Activated naive CD4-positive, alpha-beta T cell treated with anti-CD3 and anti-CD28 coated beads for 36 hours (primary cell): ENCODE measurements at regions of chr9 and their contacts with region 1.

Region 1: DNA sequence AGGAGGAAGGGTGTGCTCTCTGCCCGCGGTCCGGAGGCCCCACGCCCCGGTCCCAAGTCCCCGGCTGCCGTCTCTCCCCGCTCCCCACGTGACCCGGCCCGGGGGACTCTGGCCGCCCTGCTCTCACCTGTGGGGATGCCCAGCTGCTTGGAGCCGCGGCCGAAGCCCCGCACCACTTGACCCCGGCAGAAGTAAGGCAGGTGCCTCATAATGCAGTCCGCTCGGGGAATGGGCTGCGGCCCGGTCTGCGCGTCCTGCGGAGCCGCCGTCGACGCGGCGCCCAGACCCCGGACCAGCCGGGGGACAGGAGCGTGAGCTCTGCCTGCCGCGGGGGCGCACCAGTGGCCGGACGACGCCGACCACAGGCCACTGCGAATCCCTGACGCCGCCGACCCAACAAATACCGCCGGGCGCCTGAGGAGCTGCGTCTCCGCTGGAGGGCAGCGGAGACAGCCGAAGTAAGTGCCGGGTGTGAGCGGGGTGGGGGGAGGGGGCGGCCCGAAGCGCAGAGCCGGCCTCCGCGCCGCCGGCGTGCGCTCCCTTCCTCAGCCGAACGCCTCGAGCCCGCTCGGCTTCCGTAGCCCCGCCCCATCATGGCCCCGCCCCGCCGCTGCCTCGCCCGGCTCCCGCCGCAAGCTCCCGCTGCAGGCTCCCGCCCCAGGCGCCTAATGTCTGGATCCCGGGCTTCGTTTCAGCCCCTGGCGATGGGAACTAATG is at the start of gene RFK:
- DNase-seq: peak; percentile 94
- H3K4me3 Mint-ChIP-seq: peak within 1 kb of the TSS; percentile 96
- H3K27ac Mint-ChIP-seq: peak within 1 kb of the TSS; percentile 92
- H3K4me1 Mint-ChIP-seq: peaks cover 25% of the 10 kb centered on the region
- H3K27me3 Mint-ChIP-seq: no peaks in the 10 kb centered on the region
- total RNA-seq, gene RFK: 4.2 to 5.2 TPM

Region 2: GRCh38 chr9:75988663-75989062 is 405.5 kb before region 1 on chr9:
- CTCF ChIA-PET with region 1: no interaction called
- intact Hi-C with region 1: no loop called
- DNase-seq: no peak
- H3K4me3 Mint-ChIP-seq: no peak overlapping the region
- H3K27ac Mint-ChIP-seq: no peak overlapping the region
- H3K4me1 Mint-ChIP-seq: peaks cover 50% of the 10 kb centered on the region
- H3K27me3 Mint-ChIP-seq: no peaks in the 10 kb centered on the region

Region 3: GRCh38 chr9:76271755-76272154 is 122.4 kb before region 1 on chr9:
- CTCF ChIA-PET with region 1: no interaction called
- intact Hi-C with region 1: no loop called
- DNase-seq: no peak
- H3K4me3 Mint-ChIP-seq: no peak overlapping the region
- H3K27ac Mint-ChIP-seq: no peak overlapping the region
- H3K4me1 Mint-ChIP-seq: no peaks in the 10 kb centered on the region
- H3K27me3 Mint-ChIP-seq: no peaks in the 10 kb centered on the region

Region 4: GRCh38 chr9:76379512-76379911 is 14.6 kb before region 1 on chr9:
- CTCF ChIA-PET with region 1: interaction called, 13 read pairs
- intact Hi-C with region 1: no loop called
- DNase-seq: no peak
- H3K4me3 Mint-ChIP-seq: no peak overlapping the region
- H3K27ac Mint-ChIP-seq: no peak overlapping the region
- H3K4me1 Mint-ChIP-seq: no peaks in the 10 kb centered on the region
- H3K27me3 Mint-ChIP-seq: no peaks in the 10 kb centered on the region

Region 5: DNA sequence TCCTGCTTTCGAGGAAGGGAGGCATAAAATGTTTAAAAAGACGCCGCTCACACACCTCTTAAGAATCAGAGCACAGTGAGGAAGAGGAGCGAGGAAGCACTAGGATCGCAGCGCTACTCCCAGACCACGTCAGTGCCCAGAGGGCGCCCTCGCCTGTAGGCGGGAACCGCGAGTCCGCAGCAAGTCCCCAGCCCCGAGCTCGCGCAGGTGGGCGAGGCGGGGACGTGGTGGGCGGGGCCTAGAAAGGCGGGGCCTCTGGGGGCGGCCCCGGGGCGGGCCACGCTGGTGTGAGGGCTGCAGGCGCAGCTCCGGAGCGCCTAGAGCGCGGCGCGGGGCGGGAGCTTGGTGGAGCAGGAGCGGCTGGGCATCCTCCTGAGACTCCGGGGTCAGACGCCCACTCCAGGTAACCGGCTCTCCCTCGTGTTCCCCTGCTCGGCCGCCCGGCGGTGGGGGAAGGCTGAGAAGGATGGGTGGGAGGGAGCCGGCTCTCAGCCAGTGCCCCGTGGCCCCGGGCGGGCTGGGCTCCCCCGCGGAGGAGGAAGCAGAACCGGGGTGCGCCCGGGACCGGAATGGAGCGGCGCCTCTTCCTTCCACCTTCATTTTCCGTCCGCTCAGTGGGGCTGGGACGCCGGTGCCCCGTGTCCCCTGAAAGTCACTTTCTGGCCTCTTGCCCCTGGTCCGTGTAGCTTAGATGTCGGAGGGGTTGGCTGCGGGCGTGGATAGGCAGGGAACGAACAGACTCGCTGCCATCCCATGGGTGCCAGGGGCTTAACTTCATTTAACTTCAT is 65.0 kb after region 1 on chr9 and contains the start of gene GCNT1:
- CTCF ChIA-PET with region 1: interaction called, 5 read pairs
- intact Hi-C with region 1: loop called (anchors 1 kb)
- DNase-seq: peak; percentile 89
- H3K4me3 Mint-ChIP-seq: peak within 1 kb of the TSS; percentile 90
- H3K27ac Mint-ChIP-seq: no peak within 1 kb of the TSS
- H3K4me1 Mint-ChIP-seq: peaks cover 12% of the 10 kb centered on the region
- H3K27me3 Mint-ChIP-seq: peaks cover 8% of the 10 kb centered on the region
- total RNA-seq, gene GCNT1: 0.48 to 0.54 TPM

Region 6: DNA sequence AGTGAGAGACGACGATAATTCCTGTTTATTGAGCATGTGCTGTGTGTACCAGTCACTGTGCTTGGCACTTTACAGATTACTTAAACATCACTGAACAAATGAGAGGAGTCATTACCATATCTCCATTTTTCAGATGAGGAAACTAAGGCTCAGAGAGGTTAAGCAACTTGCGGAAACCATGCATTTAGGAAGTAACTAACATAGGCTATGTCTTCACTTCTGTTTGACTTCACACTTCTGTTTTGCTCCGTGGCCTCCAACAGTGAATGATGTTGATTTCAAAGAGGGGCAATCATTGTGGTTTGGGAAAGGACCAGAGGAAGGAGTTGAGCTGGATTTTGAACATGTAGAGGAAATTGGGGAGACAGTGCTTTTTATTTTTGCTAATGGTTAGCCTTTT is 81.6 kb after region 1 on chr9:
- CTCF ChIA-PET with region 1: no interaction called
- intact Hi-C with region 1: no loop called
- DNase-seq: no peak
- H3K4me3 Mint-ChIP-seq: no peak overlapping the region
- H3K27ac Mint-ChIP-seq: no peak overlapping the region
- H3K4me1 Mint-ChIP-seq: no peaks in the 10 kb centered on the region
- H3K27me3 Mint-ChIP-seq: no peaks in the 10 kb centered on the region

Region 7: GRCh38 chr9:76704593-76705204 is 310.6 kb after region 1 on chr9:
- CTCF ChIA-PET with region 1: interaction called, 8 read pairs
- intact Hi-C with region 1: loop called (anchors 1 kb)
- DNase-seq: no peak
- H3K4me3 Mint-ChIP-seq: no peak overlapping the region
- H3K27ac Mint-ChIP-seq: no peak overlapping the region
- H3K4me1 Mint-ChIP-seq: no peaks in the 10 kb centered on the region
- H3K27me3 Mint-ChIP-seq: peaks cover 41% of the 10 kb centered on the region

Region 8: DNA sequence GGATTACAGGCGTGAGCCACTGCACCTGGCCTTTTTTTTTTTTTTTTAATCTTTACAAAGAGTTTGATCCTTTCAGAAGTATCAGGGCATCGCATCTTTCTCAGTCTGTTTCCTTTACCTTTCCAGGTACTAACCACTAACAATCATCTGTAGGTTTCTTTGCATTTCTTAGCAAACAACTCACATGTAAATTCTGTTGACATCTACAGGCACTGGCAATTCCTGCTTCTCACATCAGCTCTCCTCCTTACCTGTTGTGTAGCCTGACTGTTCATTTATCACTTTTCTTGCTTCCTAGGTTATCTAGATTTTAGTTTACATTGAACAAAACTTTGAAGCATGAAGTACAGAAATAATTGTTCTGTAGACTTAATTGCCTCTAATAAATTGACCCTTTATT is 755.8 kb after region 1 on chr9:
- CTCF ChIA-PET with region 1: no interaction called
- intact Hi-C with region 1: loop called (anchors 5 kb)
- DNase-seq: no peak
- H3K4me3 Mint-ChIP-seq: no peak overlapping the region
- H3K27ac Mint-ChIP-seq: no peak overlapping the region
- H3K4me1 Mint-ChIP-seq: no peaks in the 10 kb centered on the region
- H3K27me3 Mint-ChIP-seq: peaks cover 14% of the 10 kb centered on the region